Endothelial cell of umbilical vein (primary cell): ENCODE measurements at regions of chr14 and their contacts with region 1.

Region 1: DNA sequence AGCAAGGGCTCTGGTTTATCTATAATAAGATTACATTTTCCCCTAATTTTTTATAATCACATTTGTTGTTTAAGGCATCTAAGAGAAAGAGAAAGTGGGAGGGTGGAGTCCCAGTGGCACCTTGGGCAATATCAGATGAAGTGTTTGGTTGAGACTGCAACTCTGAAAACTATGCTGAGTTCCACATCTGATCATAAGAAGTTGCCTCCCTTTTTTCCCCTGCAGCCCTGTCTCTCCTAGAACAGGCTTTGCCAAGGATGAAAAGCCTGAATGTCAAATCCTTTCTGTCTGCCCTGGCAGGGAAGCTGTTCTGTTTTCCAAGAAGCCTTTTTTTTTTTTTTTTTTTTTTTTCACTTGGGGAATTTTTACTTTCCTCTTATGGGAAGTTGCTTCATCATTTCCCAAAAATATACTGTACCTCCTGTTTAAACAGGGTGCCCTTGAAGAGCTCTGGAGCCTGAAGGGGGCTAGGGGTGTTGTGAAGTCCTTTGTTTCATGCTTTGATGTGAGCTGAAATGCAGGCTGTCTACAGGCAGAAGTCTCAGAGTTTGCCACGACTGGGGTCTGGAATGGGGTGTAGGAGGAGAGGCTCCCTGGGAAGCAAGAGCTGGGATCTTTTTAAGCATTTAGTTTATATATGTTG is 71.3 kb downstream of the SUSD6 start:
- DNase-seq: no peak
- H3K4me3 ChIP-seq: no peak overlapping the region
- H3K27ac ChIP-seq: no peak overlapping the region
- H3K4me1 ChIP-seq: no peaks in the 10 kb centered on the region
- H3K27me3 ChIP-seq: no peaks in the 10 kb centered on the region
- CTCF ChIP-seq: no peak
- POLR2A ChIP-seq: no peak

Region 2: GRCh38 chr14:69625299-69626131 is 57.2 kb before region 1 on chr14:
- CTCF ChIA-PET with region 1: no interaction called
- POLR2A ChIA-PET with region 1: no interaction called
- dilution Hi-C with region 1: no loop called
- intact Hi-C with region 1: loop called (anchors 5 kb)
- DNase-seq: peak; percentile 78
- H3K4me3 ChIP-seq: no peak overlapping the region
- H3K27ac ChIP-seq: peak overlapping the region; percentile 54
- H3K4me1 ChIP-seq: peaks cover 18% of the 10 kb centered on the region
- H3K27me3 ChIP-seq: no peaks in the 10 kb centered on the region
- CTCF ChIP-seq: no peak
- POLR2A ChIP-seq: peak; percentile 44

Region 3: GRCh38 chr14:69789118-69789640 is 106.4 kb after region 1 on chr14:
- CTCF ChIA-PET with region 1: no interaction called
- POLR2A ChIA-PET with region 1: no interaction called
- dilution Hi-C with region 1: no loop called
- intact Hi-C with region 1: no loop called
- DNase-seq: no peak
- H3K4me3 ChIP-seq: no peak overlapping the region
- H3K27ac ChIP-seq: no peak overlapping the region
- H3K4me1 ChIP-seq: no peaks in the 10 kb centered on the region
- H3K27me3 ChIP-seq: no peaks in the 10 kb centered on the region
- CTCF ChIP-seq: no peak
- POLR2A ChIP-seq: no peak